Posterior cingulate gyrus (tissue), 11 donors: ENCODE measurements at regions of chr6 and their contacts with region 1.

Region 1: DNA sequence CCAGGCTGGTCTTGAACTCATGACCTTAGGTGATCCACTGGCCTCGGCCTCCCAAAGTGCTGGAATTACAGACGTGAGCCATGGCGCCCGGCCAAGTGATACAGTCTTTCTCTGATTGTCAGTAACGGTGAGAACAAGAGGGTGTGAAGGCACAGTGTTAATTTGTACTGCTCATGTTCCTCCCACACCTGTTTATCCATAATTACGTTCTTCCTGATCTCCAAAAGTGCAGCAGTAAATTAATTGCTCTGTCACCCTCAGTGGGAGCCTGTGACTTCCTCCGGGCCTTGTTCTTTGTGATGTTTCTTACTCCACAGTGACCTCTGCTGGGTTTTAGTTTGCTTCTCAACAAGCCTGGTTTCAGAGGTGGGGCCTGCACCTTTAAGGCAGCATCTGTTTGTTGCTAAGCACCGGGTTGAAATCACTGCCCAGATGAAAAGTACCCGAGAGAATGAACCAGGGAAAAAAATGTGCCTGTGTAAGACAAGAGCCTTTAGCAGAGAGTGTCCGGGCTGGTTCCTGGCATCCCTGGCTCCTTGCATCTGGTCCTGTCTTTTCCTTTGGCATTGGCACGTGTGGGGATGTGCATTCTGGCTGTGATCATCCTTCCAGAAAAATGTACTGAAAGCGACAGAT is 89.1 kb upstream of the CLDN20 start:
- DNase-seq: peak in 8 of 10 donors; percentile 35 to 90 (median 58)

Region 2: DNA sequence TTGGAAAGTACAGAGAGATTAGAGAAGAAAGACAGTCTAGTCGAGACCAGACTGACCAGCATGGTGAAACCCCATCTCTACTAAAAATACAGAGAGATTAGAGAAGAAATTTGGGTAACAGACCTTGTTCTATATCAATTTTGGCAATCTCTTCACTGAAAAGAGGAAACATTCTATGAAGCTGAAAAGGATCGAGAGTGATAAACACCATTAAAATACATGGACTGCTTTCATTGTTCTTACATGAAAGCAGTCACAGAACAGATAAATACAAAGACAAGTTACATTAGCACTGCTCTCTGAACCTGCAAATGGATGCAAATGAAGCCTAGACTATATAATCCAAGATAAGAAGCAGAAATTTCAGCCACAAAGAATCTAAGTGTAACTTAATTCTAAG is 1144.0 kb before region 1 on chr6:
- intact Hi-C with region 1: no loop called
- DNase-seq: no peak

Region 3: DNA sequence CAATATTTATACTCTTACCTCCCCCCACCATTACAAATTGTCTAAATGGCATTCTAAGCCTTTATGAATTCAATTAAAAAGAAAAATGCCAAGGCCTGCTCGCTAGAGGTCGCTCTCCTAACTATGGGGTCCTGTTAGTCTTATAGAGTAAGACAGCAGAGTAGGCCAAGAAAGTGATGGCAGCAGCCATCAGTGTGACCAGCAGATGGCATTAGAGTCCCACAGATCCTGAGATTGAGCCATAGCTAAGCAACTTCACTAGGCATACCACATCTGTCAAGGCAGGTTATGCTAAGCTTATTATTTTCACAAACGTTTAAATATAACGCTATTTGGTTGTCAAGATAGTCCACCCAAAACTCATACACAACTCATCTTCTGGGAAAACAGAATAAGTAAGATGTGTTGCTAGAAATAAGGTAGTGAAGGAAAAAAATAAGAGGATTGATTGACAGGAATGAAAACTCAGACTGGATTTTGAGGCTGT is 499.0 kb before region 1 on chr6:
- intact Hi-C with region 1: loop called (anchors 5 kb)
- DNase-seq: peak; percentile 69 to 98 (median 88)

Region 4: DNA sequence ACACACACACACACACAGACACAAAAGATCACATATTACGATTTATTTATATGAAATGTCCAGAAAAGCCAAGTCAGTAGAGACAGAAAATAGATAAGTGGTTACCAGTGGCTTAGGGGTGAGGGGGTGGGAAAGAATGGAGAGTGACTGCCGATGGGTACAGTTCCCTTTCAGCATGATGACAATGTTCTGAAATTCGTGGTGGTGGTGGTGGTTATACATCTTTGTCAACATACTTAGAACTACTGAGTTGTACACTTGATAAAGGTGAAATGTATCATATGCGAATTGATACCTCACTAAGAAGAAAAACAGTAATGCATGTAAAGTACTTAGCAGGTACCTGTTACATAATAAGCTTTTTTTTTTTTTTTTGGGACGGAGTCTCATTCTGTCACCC is 317.2 kb before region 1 on chr6:
- intact Hi-C with region 1: no loop called
- DNase-seq: no peak

Region 5: DNA sequence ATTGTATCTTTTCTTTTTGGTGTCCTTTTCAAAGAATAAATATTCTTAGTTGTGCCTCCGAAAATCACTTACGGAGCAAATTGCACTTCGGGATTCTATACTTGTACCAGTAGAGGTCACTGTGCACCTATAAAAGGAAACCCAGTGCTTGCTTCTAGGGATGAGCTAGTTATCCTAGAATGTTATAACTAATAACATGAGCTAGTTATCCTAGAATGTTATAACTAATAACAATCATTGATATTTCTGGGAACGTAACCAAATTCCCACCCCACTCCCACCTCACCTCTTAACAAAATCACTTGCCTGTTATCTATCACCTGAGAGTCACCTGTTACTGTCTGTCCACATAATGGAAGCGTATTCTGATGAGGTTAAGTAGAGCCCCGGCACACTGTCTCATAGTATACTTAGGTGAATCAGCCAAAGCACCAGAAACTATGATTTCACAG is 306.5 kb before region 1 on chr6:
- intact Hi-C with region 1: loop called (anchors 1 kb)
- DNase-seq: no peak

Region 6: DNA sequence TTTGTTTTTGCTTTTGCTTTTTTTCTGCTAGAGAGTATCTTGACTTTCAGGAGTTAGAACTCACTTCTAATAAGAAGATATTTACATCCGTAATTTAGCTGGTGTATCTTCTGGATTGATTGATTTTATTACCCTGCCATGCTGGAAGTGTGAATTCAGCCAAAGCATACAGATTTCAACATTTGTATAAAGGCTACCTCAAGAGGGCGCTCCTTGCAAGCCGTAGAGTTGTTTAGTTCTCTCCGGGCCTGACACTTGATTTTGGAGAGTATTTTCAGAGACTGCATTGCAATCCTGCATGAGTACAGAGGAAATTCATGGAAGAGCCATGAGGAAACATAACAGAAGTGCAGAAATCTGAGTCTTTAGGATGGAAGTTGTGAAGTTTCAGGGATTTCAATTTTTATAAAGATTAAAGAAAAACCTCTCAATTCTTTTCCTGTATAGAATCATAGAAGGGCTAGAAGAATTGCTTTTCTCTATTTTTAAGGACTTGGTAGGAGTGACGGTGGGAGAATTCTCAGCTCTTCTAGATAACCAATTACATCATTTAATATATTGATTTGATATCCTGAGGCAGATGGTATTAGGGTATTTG is 246.3 kb before region 1 on chr6:
- intact Hi-C with region 1: loop called (anchors 1 kb)
- DNase-seq: peak in 5 of 10 donors; percentile 33 to 65 (median 57)

Region 7: DNA sequence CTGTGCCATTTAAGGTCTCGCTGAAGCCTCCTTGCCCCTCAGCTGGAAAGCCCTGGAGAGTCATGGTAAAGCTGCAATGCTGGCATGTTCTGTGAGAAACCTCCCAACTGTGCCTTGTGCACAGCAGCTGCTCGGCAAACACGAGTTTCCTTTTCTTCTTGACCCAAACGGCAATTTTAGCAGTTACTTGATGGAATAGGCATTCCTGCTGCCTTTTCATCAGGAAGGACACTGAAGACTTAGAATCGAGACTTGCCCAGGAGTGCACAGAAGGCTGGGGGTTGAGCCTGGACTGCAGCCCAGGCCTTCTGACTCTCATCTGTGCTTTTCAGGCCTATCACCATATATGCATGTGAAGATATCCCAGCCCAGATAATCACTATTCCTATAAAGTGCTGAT is 60.4 kb after region 1 on chr6:
- intact Hi-C with region 1: no loop called
- DNase-seq: no peak

Region 8: DNA sequence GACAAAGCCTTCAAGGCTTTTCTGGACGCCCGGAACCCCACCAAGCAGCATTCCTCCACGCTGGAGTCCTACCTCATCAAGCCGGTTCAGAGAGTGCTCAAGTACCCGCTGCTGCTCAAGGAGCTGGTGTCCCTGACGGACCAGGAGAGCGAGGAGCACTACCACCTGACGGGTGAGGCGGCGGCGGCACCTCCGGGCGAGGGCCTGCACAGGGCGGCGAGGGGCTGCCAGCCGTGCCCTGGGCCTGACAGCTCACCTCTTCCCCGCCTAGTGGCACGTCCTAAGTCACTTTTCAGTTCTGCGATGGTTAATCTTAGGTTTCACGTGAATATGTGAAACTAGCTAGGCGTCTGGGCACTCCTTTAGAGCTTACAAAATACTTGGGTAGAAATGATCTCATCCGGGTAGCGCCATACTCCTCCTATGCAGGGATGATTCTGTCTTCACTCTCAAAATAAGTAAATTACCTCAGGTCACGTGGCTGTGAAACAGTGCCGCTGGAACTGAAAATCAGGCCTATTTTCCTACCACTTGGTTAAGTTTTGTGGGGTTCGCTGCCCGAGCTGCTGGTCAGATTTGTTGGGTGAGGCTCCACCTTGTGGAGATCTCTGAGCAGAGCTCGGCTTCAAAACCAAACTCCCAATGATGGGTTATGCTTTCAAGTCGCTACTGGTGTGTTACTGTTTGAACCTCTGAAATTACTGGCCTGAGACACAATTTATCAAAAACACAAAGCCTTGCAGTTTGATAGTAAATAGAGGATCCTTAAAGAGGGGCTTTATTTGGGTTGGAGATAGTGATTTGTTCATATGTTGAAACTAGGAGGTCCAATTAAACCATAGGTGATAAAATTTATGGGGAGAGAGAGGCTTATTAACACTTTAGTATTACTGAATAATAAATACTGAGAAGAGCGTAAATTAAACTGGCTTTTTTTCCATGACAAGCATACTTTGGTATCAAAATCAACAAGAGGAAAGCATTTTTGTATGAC is 73.6 kb after region 1 on chr6:
- intact Hi-C with region 1: loop called (anchors 2 kb)
- DNase-seq: peak; percentile 53 to 95 (median 66)

Region 9: GRCh38 chr6:155314092-155314772 is 139.5 kb after region 1 on chr6 and contains the start of gene TFB1M:
- intact Hi-C with region 1: loop called (anchors 2 kb)
- DNase-seq: peak; percentile 98 to 100 (median 98)

Region 10: DNA sequence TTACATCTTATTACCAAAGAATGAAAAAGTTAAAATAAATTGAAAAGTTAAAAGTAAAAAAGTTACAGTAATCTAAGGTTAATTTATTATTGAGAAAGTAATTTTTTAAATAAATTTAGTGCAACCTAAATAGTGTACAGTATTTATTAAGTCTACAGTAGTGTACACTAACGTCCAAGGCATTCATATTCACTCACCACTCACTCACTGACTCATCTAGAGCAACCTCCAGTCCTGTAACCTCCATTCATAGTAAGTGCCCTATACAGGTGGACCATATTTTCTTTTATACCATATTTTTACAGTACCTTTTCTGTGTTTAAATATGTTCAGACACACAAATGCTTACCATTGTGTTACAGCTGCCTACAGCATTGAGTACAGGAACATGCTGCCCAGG is 905.7 kb after region 1 on chr6:
- intact Hi-C with region 1: no loop called
- DNase-seq: no peak